ENCODE measurements at regions of chr3 and their contacts with region 1.

Region 1: DNA sequence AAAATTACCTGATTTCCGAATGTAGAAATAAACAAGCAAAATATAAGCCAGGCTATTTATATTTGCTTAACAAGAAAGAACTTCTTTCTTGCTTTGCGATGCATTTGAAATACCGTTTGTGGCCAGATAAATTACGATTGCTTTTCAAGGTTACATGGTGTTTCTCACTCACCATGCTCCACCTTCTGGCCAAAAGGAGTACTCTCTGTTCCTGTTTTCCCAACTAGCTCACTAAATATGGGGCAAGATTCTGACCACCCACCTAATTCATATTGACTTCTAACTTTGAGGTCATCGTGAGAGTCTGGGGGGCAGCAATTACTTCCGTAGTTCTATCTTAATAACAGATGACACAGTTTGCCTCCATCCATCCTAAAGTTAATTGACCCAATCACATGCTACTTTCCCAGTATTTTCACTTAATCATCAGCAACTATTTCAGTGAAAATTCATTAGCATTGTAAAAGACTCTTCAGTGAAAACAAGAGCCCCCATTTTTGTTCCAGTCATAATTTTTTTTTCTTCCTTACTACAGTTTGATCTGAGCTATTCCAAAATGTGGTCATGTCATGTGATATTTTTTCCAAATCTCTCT is 25.9 kb downstream of the ACP3 start:
- DNase-seq: peak; percentile 8 to 50
- ATAC-seq: peak; percentile 84 to 85
- H3K4me3 ChIP-seq: no peak overlapping the region
- H3K27ac ChIP-seq: no peak overlapping the region
- H3K4me1 ChIP-seq: peaks cover 5% of the 10 kb centered on the region; the same call in 1 of the 3 replicates
- CTCF ChIP-seq: peak; percentile 70
- EP300 ChIP-seq: no peak
- POLR2A ChIP-seq: no peak
- RAD21 ChIP-seq: peak; percentile 59 to 67; a peak in 4 of 5 replicates

Region 2: GRCh38 chr3:132253262-132253878 is 89.7 kb before region 1 on chr3:
- CTCF ChIA-PET with region 1: interaction called, 39 read pairs
- POLR2A ChIA-PET with region 1: interaction called, 3 read pairs
- DNase-seq: peak; percentile 23 to 70
- ATAC-seq: peak; percentile 55 to 77; a peak in 3 of 6 replicates
- H3K4me3 ChIP-seq: no peak overlapping the region
- H3K27ac ChIP-seq: no peak overlapping the region
- H3K4me1 ChIP-seq: peaks cover 22% of the 10 kb centered on the region
- CTCF ChIP-seq: peak; percentile 71
- EP300 ChIP-seq: no peak
- POLR2A ChIP-seq: no peak
- RAD21 ChIP-seq: peak; percentile 69 to 72

Region 3: DNA sequence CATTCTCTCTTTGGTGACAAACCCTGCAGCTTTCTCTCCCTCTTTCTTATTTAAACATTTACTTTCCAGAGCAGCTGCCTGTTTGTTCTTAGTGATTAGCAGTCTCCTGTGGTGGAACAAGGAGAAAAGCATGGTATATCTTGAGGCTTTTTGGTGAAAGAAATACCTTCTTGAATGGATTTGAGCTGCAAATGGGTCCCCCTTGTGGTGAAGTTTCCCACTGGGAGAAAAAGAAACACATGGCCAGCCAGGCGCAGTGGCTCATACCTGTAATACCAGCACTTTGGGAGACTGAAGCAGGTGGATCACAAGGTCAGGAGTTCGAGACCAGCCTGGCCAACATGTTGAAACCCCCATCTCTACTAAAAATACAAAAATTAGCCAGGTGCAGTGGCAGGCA is 74.2 kb before region 1 on chr3:
- CTCF ChIA-PET with region 1: interaction called, 16 read pairs
- POLR2A ChIA-PET with region 1: no interaction called
- DNase-seq: peak in 1 of 2 experiments; percentile 61
- ATAC-seq: peak in 1 of 2 experiments; percentile 51; a peak in 3 of 6 replicates
- H3K4me3 ChIP-seq: no peak overlapping the region
- H3K27ac ChIP-seq: no peak overlapping the region
- H3K4me1 ChIP-seq: no peaks in the 10 kb centered on the region
- CTCF ChIP-seq: no peak; the same call in 2 of the 3 replicates
- EP300 ChIP-seq: no peak
- POLR2A ChIP-seq: no peak
- RAD21 ChIP-seq: peak in 1 of 2 experiments; percentile 13; a peak in 1 of 5 replicates

Region 4: DNA sequence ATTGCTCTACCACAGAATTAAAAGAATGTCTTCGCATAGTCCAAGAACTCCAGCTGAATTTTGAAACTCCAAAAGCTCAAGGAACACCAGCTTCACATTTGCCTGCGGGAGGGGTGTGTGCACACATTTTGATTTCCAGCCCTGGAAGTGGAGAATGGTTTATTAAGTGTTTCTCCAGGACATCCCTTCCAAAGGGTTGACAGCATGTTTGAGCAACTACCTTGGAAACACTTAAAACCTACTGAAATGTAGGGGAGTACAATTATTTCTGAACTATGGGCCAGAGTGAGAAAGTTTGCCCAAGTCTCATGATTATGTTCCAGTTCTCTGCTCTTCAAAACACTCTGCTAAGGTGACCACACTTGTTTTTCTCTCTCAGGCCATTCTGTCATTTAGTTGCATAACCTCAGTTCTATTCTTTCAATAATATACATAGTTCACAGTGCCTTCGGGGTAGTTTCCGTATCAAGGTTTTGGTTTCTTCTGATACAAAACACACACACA is 18.0 kb before region 1 on chr3:
- CTCF ChIA-PET with region 1: interaction called, 21 read pairs
- POLR2A ChIA-PET with region 1: no interaction called
- DNase-seq: no peak
- ATAC-seq: no peak
- H3K4me3 ChIP-seq: no peak overlapping the region
- H3K27ac ChIP-seq: no peak overlapping the region
- H3K4me1 ChIP-seq: no peaks in the 10 kb centered on the region
- CTCF ChIP-seq: no peak
- EP300 ChIP-seq: no peak
- POLR2A ChIP-seq: no peak
- RAD21 ChIP-seq: no peak

Region 5: DNA sequence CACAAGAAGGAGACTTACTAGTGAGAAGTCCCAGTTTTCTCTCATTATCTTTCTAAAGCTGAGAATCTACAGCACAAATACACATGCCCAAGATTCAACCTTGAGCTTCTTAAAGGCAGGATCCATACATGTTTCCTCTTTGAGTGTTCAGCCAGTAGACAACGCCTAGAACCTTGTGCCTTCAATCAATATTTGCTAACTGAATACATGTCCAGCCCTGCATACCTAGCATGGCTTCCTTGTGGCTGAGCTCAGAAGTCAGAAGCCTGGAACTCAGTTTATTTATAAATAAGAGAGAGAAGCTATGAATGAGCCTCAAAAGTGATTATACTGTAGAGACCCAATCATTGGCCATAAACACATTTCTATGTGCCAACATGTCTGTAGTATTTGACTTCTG is 17.6 kb after region 1 on chr3:
- CTCF ChIA-PET with region 1: no interaction called
- POLR2A ChIA-PET with region 1: no interaction called
- DNase-seq: no peak
- ATAC-seq: no peak
- H3K4me3 ChIP-seq: no peak overlapping the region
- H3K27ac ChIP-seq: no peak overlapping the region
- H3K4me1 ChIP-seq: no peaks in the 10 kb centered on the region
- CTCF ChIP-seq: no peak
- EP300 ChIP-seq: no peak
- POLR2A ChIP-seq: no peak
- RAD21 ChIP-seq: no peak

Region 6: GRCh38 chr3:132378048-132378762 is 35.1 kb after region 1 on chr3:
- CTCF ChIA-PET with region 1: no interaction called
- POLR2A ChIA-PET with region 1: no interaction called
- DNase-seq: no peak
- ATAC-seq: no peak
- H3K4me3 ChIP-seq: no peak overlapping the region
- H3K27ac ChIP-seq: no peak overlapping the region
- H3K4me1 ChIP-seq: no peaks in the 10 kb centered on the region
- CTCF ChIP-seq: no peak
- EP300 ChIP-seq: no peak
- POLR2A ChIP-seq: no peak
- RAD21 ChIP-seq: no peak

Measured in A549 (cell line).